ENCODE measurements at regions of chr1 and their contacts with region 1.

Region 1: DNA sequence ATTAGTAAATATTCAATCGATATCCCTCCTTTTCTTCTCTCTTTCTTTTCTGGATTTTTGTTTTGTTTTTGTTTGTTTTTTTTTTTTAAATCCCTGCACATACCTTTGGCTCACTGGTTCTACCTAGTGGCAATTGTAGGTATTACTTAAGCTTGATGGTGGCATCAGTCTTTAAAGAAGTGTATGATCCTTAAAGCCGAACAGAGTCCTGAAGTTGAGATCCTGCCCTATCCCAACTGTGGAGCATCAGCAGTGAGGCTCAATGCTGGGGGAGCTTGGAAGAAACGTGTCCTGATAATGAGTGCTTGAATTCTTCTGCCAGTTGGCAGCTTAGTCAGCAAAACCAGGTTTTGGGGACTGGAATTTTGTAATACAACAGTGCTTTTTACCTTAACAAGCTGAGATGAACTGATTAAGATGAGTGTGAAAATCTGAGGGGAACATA is 60.8 kb downstream of the FASLG start:
- DNase-seq: peak in 1 of 2 donors; percentile 79
- ATAC-seq: peak; percentile 78 to 94 (median 91)
- H3K4me3 ChIP-seq: no peak overlapping the region
- H3K4me3 Mint-ChIP-seq: peak overlapping the region; percentile 14
- H3K27ac ChIP-seq: no peak overlapping the region
- H3K27ac Mint-ChIP-seq: peak overlapping the region; percentile 20 to 74
- H3K4me1 ChIP-seq: peaks cover 22% of the 10 kb centered on the region
- H3K4me1 Mint-ChIP-seq: peaks cover 48 to 50% of the 10 kb centered on the region in 2 donors
- H3K27me3 ChIP-seq: no peaks in the 10 kb centered on the region
- H3K27me3 Mint-ChIP-seq: no peaks in the 10 kb centered on the region
- CTCF ChIP-seq: peak; percentile 93

Region 2: GRCh38 chr1:172449585-172450534 is 269.9 kb before region 1 on chr1:
- intact Hi-C with region 1: loop called (anchors 2 kb)
- DNase-seq: peak in 1 of 2 donors; percentile 63
- ATAC-seq: peak; percentile 90 to 96 (median 93)
- H3K4me3 ChIP-seq: no peak overlapping the region
- H3K4me3 Mint-ChIP-seq: no peak overlapping the region
- H3K27ac ChIP-seq: no peak overlapping the region
- H3K27ac Mint-ChIP-seq: no peak overlapping the region
- H3K4me1 ChIP-seq: peaks cover 6% of the 10 kb centered on the region
- H3K4me1 Mint-ChIP-seq: peaks cover 0 to 11% of the 10 kb centered on the region in 2 donors
- H3K27me3 ChIP-seq: no peaks in the 10 kb centered on the region
- H3K27me3 Mint-ChIP-seq: no peaks in the 10 kb centered on the region
- CTCF ChIP-seq: peak; percentile 70

Region 3: GRCh38 chr1:172609528-172609927 is 110.2 kb before region 1 on chr1:
- intact Hi-C with region 1: loop called (anchors 1 kb)
- DNase-seq: peak in 1 of 2 donors; percentile 63
- ATAC-seq: peak; percentile 76 to 95 (median 86)
- H3K4me3 ChIP-seq: no peak overlapping the region
- H3K4me3 Mint-ChIP-seq: no peak overlapping the region
- H3K27ac ChIP-seq: no peak overlapping the region
- H3K27ac Mint-ChIP-seq: peak overlapping the region; percentile 66 to 80
- H3K4me1 ChIP-seq: no peaks in the 10 kb centered on the region
- H3K4me1 Mint-ChIP-seq: peaks cover 9% of the 10 kb centered on the region in 2 donors
- H3K27me3 ChIP-seq: no peaks in the 10 kb centered on the region
- H3K27me3 Mint-ChIP-seq: no peaks in the 10 kb centered on the region
- CTCF ChIP-seq: peak; percentile 69

Region 4: GRCh38 chr1:173190101-173190906 is 470.6 kb after region 1 on chr1:
- intact Hi-C with region 1: no loop called
- DNase-seq: no peak
- ATAC-seq: no peak
- H3K4me3 ChIP-seq: no peak overlapping the region
- H3K4me3 Mint-ChIP-seq: no peak overlapping the region
- H3K27ac ChIP-seq: peak overlapping the region; percentile 7
- H3K27ac Mint-ChIP-seq: no peak overlapping the region
- H3K4me1 ChIP-seq: peaks cover 8% of the 10 kb centered on the region
- H3K4me1 Mint-ChIP-seq: peaks cover 2 to 8% of the 10 kb centered on the region in 2 donors
- H3K27me3 ChIP-seq: no peaks in the 10 kb centered on the region
- H3K27me3 Mint-ChIP-seq: peaks cover 0 to 2% of the 10 kb centered on the region in 2 donors
- CTCF ChIP-seq: no peak